Gastrocnemius medialis (tissue), 4 donors: ENCODE measurements at regions of chr1 and their contacts with region 1.

Region 1: GRCh38 chr1:159854693-159855192 is 7.7 kb downstream of the VSIG8 start:
- DNase-seq: peak; percentile 64 to 75
- ATAC-seq: peak; percentile 85 to 86
- H3K4me3 ChIP-seq: peak overlapping the region; percentile 69 to 99 (median 82)
- H3K27ac ChIP-seq: peak overlapping the region; percentile 82 to 95 (median 89)
- H3K4me1 ChIP-seq: peaks cover 8 to 14% of the 10 kb centered on the region in 2 donors
- H3K27me3 ChIP-seq: no peaks in the 10 kb centered on the region
- CTCF ChIP-seq: peak in 3 of 5 experiments; percentile 9 to 30 (median 17)
- POLR2A ChIP-seq: peak; percentile 55 to 71

Region 2: DNA sequence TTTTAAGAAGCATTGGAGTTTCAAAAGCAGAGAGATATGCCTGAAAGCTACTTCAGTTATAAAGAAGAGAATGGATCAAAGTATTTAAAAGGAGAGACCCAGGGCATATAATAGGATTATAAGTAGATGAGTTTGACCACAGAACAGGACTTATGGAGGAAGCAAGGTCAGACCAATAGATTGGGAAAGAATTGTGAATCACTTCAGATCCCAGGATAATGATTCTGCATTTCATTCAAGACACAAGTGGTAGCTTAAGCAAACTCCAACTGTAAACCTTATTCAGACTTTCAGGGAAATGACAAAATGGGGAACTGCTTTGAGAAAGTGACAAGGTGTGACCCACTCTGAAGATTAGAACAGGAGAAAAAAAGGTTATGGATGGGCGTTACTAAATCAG is 300.0 kb before region 1 on chr1:
- in situ Hi-C with region 1: no loop called
- intact Hi-C with region 1: no loop called
- DNase-seq: no peak
- ATAC-seq: no peak
- H3K4me3 ChIP-seq: no peak overlapping the region
- H3K27ac ChIP-seq: no peak overlapping the region
- H3K4me1 ChIP-seq: no peaks in the 10 kb centered on the region
- H3K27me3 ChIP-seq: no peaks in the 10 kb centered on the region
- CTCF ChIP-seq: no peak
- POLR2A ChIP-seq: no peak

Region 3: GRCh38 chr1:159829273-159829634 is 25.5 kb before region 1 on chr1:
- in situ Hi-C with region 1: no loop called
- intact Hi-C with region 1: loop called (anchors 2 kb)
- DNase-seq: peak; percentile 26 to 38
- ATAC-seq: peak; percentile 57 to 60
- H3K4me3 ChIP-seq: no peak overlapping the region
- H3K27ac ChIP-seq: peak overlapping the region in 1 of 4 donors; percentile 63
- H3K4me1 ChIP-seq: peaks cover 0 to 10% of the 10 kb centered on the region in 2 donors
- H3K27me3 ChIP-seq: peaks cover 0 to 2% (median 0%) of the 10 kb centered on the region in 3 donors
- CTCF ChIP-seq: peak in 3 of 5 experiments; percentile 38 to 48 (median 47)
- POLR2A ChIP-seq: no peak

Region 4: GRCh38 chr1:159913451-159914192 is 58.9 kb after region 1 on chr1:
- in situ Hi-C with region 1: no loop called
- intact Hi-C with region 1: no loop called
- DNase-seq: no peak
- ATAC-seq: no peak
- H3K4me3 ChIP-seq: no peak overlapping the region
- H3K27ac ChIP-seq: no peak overlapping the region
- H3K4me1 ChIP-seq: peaks cover 0 to 16% of the 10 kb centered on the region in 2 donors
- H3K27me3 ChIP-seq: no peaks in the 10 kb centered on the region
- CTCF ChIP-seq: no peak
- POLR2A ChIP-seq: no peak

Region 5: GRCh38 chr1:159924981-159925712 is 70.4 kb after region 1 on chr1 and contains the start of gene TAGLN2:
- in situ Hi-C with region 1: no loop called
- intact Hi-C with region 1: loop called (anchors 10 kb)
- DNase-seq: peak; percentile 69 to 71
- ATAC-seq: peak; percentile 49 to 53
- H3K4me3 ChIP-seq: peak within 1 kb of the TSS; percentile 74 to 77 (median 76)
- H3K27ac ChIP-seq: peak within 1 kb of the TSS; percentile 84 to 94 (median 91)
- H3K4me1 ChIP-seq: peaks cover 12 to 16% of the 10 kb centered on the region in 2 donors
- H3K27me3 ChIP-seq: peaks cover 16 to 24% (median 19%) of the 10 kb centered on the region in 3 donors
- CTCF ChIP-seq: no peak
- POLR2A ChIP-seq: peak; percentile 62 to 87
- total RNA-seq, gene TAGLN2: 28.8 to 48.2 (median 37.5) TPM

Region 6: GRCh38 chr1:160219062-160219929 is 364.6 kb after region 1 on chr1:
- in situ Hi-C with region 1: no loop called
- intact Hi-C with region 1: no loop called
- DNase-seq: peak; percentile 35 to 46
- ATAC-seq: peak; percentile 73 to 82
- H3K4me3 ChIP-seq: no peak overlapping the region
- H3K27ac ChIP-seq: peak overlapping the region; percentile 16 to 59 (median 21)
- H3K4me1 ChIP-seq: peaks cover 11 to 17% of the 10 kb centered on the region in 2 donors
- H3K27me3 ChIP-seq: no peaks in the 10 kb centered on the region
- CTCF ChIP-seq: peak; percentile 53 to 63 (median 57)
- POLR2A ChIP-seq: no peak

Region 7: DNA sequence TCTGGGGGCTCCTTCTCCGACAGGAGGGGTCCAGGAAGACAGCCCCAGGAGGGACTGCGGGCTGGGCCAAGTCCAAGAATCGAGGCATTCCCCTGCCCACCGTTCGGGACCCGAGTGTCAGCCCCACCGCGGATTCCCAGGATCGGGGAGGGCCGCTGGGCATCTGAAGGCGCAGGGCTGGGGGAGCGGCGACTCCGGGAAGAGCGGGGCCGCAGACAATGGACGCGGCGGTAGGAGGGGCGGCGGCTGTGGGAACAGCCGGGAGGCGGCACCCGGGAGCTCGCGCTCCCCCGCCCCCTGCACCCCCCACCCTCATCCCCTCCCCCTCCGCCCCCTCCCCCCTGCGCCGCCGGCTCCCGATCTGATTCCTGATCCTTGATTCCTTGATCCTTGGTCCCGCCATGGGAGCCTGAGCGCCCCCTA is 545.5 kb after region 1 on chr1 and contains the start of gene VANGL2:
- in situ Hi-C with region 1: no loop called
- intact Hi-C with region 1: no loop called
- DNase-seq: peak in 1 of 2 donors; percentile 29
- ATAC-seq: peak; percentile 51 to 69
- H3K4me3 ChIP-seq: peak within 1 kb of the TSS; percentile 59 to 89 (median 70)
- H3K27ac ChIP-seq: peak within 1 kb of the TSS in 2 of 4 donors; percentile 32 to 74
- H3K4me1 ChIP-seq: peaks cover 0 to 6% of the 10 kb centered on the region in 2 donors
- H3K27me3 ChIP-seq: peaks cover 0 to 8% (median 3%) of the 10 kb centered on the region in 3 donors
- CTCF ChIP-seq: no peak
- POLR2A ChIP-seq: no peak
- total RNA-seq, gene VANGL2: 0.26 to 1.2 (median 0.78) TPM in 3 of 4 donors, not detected in the other